Activated T-helper 2 cell treated with anti-CD3 and anti-CD28 coated beads, Interferon-gamma antibody, Interleukin-2, Interleukin-4, amounts not matched to agents 10 μg/mL and 5 μg/mL and 100 μg/mL, durations not matched to agents 14 hours and 24 hours and 36 hours (primary cell): ENCODE measurements at regions of chr3 and their contacts with region 1.

Region 1: DNA sequence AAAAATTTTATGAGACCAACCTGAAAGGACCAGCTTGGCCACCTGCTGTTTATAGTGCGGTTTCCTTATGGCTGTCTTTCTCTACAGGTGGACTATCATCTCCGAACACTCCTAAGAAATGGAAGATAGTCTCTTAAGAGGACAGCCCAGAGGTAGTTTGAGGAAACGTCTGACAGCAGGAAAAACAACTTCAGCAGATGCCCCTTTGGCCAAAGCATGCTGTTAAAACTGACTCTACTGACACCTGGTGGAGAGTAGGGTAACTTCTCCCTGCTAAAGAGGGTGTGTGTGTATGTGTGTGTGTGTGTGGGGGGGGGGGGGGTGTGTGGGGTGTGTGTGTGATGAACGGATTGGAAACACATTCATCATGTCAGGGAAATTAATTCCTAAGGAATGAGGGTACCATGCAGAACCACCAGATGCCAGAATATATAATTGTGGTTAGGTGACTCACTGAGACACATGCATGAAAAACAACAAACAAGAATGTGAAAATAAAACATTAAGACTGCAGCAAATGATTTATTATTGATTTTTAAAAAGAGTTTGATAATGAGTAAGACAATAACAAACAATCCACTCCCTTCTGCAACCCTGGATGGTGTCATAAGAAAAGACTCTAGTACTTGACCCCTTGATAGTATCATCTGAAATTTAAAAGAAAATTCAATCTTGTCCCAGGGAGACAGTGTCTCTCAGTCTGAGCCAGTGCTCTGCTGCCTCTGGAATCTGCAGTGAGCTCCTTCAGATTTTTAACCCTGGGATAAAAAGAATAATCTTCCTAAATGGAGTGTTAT is 256.5 kb downstream of the THRB start:
- DNase-seq: no peak
- H3K4me3 Mint-ChIP-seq: no peak overlapping the region
- H3K27ac Mint-ChIP-seq: no peak overlapping the region
- H3K4me1 Mint-ChIP-seq: no peaks in the 10 kb centered on the region
- H3K27me3 Mint-ChIP-seq: peaks cover 2% of the 10 kb centered on the region

Region 2: DNA sequence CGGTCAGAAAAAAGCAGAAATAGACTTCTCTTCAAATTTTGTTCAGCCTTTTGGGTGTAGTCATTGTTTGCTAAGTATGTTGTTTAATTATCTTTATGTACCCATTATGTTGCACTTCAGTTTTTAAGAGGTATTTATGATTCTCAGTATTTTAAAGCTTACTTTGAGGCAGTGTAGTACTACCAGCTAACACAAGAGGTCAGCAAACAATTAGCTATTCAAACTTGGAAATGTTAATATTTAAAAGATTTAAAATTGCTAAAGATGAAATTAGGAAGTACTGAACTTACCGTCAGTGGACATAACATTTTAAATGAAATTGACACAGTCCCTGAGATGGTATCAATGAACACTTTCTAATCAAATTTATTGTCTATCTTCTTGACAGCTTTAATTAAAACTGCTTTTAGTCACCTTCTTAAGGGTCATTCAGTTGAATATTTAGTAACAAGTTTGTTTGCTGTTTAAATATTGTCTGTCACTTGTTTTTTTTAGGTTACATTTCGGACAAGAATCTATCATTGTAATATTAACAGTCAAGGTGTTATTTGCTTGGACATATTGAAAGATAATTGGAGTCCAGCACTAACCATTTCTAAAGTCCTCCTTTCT is 349.4 kb before region 1 on chr3:
- intact Hi-C with region 1: loop called (anchors 5 kb)
- DNase-seq: no peak
- H3K4me3 Mint-ChIP-seq: no peak overlapping the region
- H3K27ac Mint-ChIP-seq: no peak overlapping the region
- H3K4me1 Mint-ChIP-seq: no peaks in the 10 kb centered on the region
- H3K27me3 Mint-ChIP-seq: no peaks in the 10 kb centered on the region

Region 3: GRCh38 chr3:23999012-23999641 is 239.0 kb before region 1 on chr3:
- intact Hi-C with region 1: loop called (anchors 1 kb)
- DNase-seq: peak; percentile 28
- H3K4me3 Mint-ChIP-seq: no peak overlapping the region
- H3K27ac Mint-ChIP-seq: no peak overlapping the region
- H3K4me1 Mint-ChIP-seq: peaks cover 4% of the 10 kb centered on the region
- H3K27me3 Mint-ChIP-seq: peaks cover 10% of the 10 kb centered on the region

Region 4: GRCh38 chr3:24272875-24273274 is 34.7 kb after region 1 on chr3:
- intact Hi-C with region 1: no loop called
- DNase-seq: no peak
- H3K4me3 Mint-ChIP-seq: no peak overlapping the region
- H3K27ac Mint-ChIP-seq: no peak overlapping the region
- H3K4me1 Mint-ChIP-seq: no peaks in the 10 kb centered on the region
- H3K27me3 Mint-ChIP-seq: no peaks in the 10 kb centered on the region

Region 5: DNA sequence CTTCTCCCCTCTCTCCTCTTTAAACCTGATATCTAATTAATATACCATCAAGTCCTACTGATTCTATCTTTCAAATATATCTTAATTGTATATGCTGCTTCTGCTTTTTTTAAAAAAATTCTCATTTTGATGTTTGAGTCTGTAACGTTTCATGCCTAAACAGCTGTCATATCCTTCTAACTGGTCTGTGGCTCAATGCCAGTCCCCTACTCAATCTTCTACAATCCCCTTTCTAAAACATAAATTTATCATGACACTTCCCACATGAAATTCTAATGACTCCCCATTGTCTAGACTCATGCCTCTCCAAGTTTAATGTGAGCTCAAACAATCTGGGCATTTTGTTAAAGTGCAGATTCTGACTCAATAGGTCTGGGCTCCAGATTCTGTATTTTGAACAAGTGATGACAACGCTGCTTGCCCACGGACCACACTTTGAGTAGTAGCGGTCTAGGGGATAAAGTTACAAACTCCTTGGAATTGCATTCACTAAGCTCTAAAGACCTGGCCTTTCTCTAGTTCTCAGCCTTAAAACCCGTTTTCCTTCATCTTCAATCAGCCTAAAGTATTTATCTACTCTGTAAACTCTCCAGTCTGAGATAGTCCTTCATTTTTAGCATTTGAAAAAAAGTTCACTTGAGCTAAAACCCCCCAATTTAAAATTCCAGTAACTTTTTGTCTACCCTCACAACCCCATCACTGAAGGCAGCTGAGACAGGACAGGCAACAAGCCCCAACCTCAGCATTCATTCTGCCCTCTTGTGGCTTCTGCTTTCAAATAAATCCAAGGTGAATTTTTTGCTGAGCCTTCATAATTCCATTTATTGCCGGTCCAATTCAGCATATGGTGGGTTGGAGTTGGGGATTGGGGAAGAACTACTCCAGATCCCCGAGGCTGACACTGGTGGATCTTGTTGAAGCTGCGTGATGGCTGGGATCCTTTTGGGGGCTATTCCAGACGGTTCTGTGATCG is 344.5 kb after region 1 on chr3:
- intact Hi-C with region 1: no loop called
- DNase-seq: no peak
- H3K4me3 Mint-ChIP-seq: no peak overlapping the region
- H3K27ac Mint-ChIP-seq: no peak overlapping the region
- H3K4me1 Mint-ChIP-seq: no peaks in the 10 kb centered on the region
- H3K27me3 Mint-ChIP-seq: no peaks in the 10 kb centered on the region